Activated T-helper 2 cell treated with anti-CD3 and anti-CD28 coated beads, Interferon-gamma antibody, Interleukin-2, Interleukin-4, amounts not matched to agents 10 μg/mL and 5 μg/mL and 100 μg/mL, durations not matched to agents 14 hours and 24 hours and 36 hours (primary cell): ENCODE measurements at regions of chr7 and their contacts with region 1.

Region 1: DNA sequence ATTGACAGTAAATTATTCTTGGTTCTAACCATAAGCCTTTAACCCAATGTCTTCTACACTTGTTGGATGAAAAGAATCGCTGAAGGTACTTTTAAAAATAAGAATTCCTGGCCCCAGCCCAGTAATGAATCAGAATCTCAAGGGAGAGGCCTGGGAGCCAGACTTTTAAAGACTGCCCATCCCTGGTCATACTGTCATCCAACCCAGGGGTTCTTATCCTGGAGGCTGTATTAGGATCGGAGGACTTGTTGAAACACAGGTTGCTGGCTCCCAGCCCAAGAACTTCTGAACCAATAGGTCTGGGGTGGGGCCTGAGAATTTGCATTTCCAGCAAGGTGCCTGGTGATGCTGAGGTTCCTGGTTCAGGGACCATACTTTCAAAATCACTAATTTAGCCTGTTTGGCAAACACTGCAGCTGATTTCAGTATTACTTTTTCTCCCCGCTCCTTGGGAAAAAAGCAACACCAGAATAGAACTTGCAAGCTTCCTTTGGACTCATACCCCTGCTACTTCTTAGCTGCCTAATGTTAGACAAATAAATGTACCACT is 79.5 kb upstream of the FAM133B start:
- DNase-seq: no peak
- H3K4me3 Mint-ChIP-seq: no peak overlapping the region
- H3K27ac Mint-ChIP-seq: peak overlapping the region; percentile 18
- H3K4me1 Mint-ChIP-seq: peaks cover 70% of the 10 kb centered on the region
- H3K27me3 Mint-ChIP-seq: no peaks in the 10 kb centered on the region

Region 2: DNA sequence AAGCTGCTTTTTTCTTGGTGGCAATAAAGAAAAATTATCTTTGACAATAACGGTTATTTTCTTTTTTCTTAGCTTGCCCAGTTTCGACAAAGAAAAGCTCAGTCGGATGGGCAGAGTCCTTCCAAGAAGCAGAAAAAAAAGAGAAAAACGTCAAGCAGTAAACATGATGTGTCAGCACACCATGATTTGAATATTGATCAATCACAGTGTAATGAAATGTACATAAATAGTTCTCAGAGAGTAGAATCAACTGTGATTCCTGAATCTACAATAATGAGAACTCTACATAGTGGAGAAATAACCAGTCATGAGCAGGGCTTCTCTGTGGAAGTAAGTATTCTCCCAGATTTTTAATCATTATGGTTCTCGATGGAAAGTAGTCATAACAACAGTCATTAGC is 696.1 kb before region 1 on chr7:
- intact Hi-C with region 1: no loop called
- DNase-seq: no peak
- H3K4me3 Mint-ChIP-seq: no peak overlapping the region
- H3K27ac Mint-ChIP-seq: no peak overlapping the region
- H3K4me1 Mint-ChIP-seq: peaks cover 6% of the 10 kb centered on the region
- H3K27me3 Mint-ChIP-seq: no peaks in the 10 kb centered on the region

Region 3: GRCh38 chr7:92621026-92621540 is 48.6 kb before region 1 on chr7:
- intact Hi-C with region 1: loop called (anchors 1 kb)
- DNase-seq: peak; percentile 73
- H3K4me3 Mint-ChIP-seq: peak overlapping the region; percentile 37
- H3K27ac Mint-ChIP-seq: peak overlapping the region; percentile 87
- H3K4me1 Mint-ChIP-seq: peaks cover 57% of the 10 kb centered on the region
- H3K27me3 Mint-ChIP-seq: no peaks in the 10 kb centered on the region

Region 4: GRCh38 chr7:92641921-92642511 is 27.7 kb before region 1 on chr7:
- intact Hi-C with region 1: loop called (anchors 1 kb)
- DNase-seq: peak; percentile 54
- H3K4me3 Mint-ChIP-seq: peak overlapping the region; percentile 47
- H3K27ac Mint-ChIP-seq: peak overlapping the region; percentile 97
- H3K4me1 Mint-ChIP-seq: peaks cover 88% of the 10 kb centered on the region
- H3K27me3 Mint-ChIP-seq: no peaks in the 10 kb centered on the region

Region 5: GRCh38 chr7:92648067-92648466 is 21.6 kb before region 1 on chr7:
- intact Hi-C with region 1: loop called (anchors 1 kb)
- DNase-seq: no peak
- H3K4me3 Mint-ChIP-seq: peak overlapping the region; percentile 34
- H3K27ac Mint-ChIP-seq: peak overlapping the region; percentile 90
- H3K4me1 Mint-ChIP-seq: peaks cover 91% of the 10 kb centered on the region
- H3K27me3 Mint-ChIP-seq: no peaks in the 10 kb centered on the region

Region 6: DNA sequence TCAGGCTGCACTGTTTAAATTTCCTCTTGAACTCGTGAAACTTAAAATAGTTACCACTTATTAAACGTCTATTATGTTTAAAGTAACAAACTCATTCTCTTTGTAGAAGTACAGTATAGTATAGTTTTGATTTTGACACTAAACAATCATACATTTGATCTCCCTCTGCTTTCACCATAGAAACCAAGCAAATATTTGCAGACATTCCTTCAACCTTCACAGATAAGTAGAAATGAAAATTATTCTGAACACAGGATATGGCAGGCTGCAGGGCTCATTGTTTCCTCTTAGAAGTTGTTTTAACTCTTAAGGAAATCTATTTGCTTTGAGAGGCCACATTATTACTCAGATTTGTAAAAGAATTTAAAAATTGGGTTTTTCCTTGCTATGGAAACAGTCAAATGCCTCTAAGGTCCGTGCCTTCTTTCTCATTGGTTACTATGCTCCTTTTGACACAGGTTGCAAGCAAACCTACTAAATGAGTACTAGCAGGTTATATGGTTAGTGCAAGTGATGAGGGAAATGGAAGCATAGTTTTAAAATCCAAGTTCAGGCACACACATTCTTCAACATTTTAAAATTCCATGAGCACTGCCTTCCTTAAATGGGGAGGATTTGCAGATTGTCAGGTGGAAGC is 13.3 kb after region 1 on chr7:
- intact Hi-C with region 1: loop called (anchors 1 kb)
- DNase-seq: no peak
- H3K4me3 Mint-ChIP-seq: peak overlapping the region; percentile 60
- H3K27ac Mint-ChIP-seq: peak overlapping the region; percentile 93
- H3K4me1 Mint-ChIP-seq: peaks cover 84% of the 10 kb centered on the region
- H3K27me3 Mint-ChIP-seq: no peaks in the 10 kb centered on the region

Region 7: DNA sequence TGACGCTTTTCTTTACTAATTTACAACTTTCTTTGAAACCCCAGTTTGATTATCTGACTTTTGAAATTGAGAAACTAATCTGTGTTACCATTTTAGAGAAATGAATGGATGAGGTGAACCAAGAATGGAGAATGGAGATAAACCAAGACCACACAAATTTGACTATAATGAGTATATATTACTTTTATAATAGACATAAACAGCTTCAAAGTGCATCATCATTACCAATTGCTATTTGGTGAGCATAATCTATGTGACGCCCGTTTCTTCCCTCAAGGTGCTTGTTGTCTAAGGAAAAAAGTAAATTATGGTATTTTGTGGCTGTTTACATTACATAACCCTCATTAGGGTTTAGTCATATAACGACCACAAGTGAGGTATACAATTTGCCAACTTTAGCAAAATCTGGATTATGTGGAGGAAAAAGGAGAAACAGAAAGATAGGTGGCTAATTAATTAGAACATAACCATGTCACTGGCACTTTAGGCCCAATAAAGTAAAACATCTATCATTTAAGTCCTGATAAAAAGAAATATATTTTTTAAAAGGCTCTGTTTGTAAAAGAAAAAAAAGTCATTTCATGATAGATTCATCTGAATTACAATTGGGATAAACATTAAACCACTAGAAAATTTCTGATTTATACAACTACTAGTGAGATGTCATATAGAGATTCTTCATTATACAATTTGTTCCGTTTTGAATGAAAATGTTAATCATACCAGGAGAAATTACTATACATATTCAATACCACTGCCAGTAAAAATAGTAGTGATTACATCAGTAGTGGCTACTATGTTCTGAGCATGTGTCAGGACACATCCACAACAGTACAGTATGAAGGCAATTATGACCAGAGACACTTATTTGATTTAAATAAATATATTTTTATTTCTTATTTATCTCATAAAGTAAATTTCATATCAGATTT is 38.7 kb after region 1 on chr7:
- intact Hi-C with region 1: loop called (anchors 1 kb)
- DNase-seq: no peak
- H3K4me3 Mint-ChIP-seq: no peak overlapping the region
- H3K27ac Mint-ChIP-seq: peak overlapping the region; percentile 64
- H3K4me1 Mint-ChIP-seq: peaks cover 43% of the 10 kb centered on the region
- H3K27me3 Mint-ChIP-seq: no peaks in the 10 kb centered on the region

Region 8: GRCh38 chr7:92778972-92779371 is 109.3 kb after region 1 on chr7:
- intact Hi-C with region 1: no loop called
- DNase-seq: no peak
- H3K4me3 Mint-ChIP-seq: no peak overlapping the region
- H3K27ac Mint-ChIP-seq: no peak overlapping the region
- H3K4me1 Mint-ChIP-seq: peaks cover 50% of the 10 kb centered on the region
- H3K27me3 Mint-ChIP-seq: no peaks in the 10 kb centered on the region